HepG2 (cell line): ENCODE measurements at regions of chr6 and their contacts with region 1.

Region 1: DNA sequence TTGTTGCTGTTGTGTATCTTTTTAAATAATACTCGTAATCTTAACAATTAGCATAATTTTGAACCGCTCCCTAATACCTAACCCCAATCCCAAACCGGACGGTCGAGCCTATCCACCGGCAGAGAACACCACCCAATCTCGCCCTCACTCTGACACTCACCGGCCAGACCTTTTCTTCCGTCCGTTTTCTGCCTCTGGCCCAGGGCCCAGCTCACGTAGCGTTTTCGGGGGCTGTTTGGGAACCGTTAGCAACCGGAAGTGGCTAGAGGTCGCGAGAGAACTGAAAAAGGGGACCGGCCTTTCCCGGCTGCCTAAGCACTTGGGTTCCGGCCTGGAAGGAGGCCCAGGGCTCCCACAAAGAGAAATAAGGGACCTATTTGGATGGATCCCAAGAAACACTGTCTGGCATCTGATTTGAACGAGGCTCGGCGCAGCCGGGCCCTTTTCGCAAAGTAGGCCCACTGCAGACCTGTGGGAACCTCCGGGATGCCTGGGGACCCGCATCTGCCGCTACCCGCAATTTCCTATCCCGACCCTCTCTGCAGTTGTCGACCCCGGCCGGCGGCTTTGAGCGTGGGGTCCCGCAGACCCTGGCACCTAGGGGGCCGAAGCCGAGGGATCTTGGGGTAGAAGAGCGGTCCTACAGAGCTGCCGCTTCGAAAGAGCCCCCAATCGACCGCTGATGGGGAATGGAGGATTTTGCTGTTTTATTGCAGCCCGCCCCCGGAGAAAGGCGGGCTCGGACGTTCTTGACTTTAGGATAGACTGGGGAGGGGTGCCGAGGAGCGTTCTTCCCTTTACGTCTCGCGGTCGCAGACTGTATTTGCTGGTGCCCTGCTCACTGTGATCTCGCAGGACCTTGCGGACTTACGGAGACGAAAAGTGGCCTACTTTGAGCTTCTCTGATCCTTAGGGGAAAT is 4.8 kb upstream of the ZKSCAN8 start:
- DNase-seq: peak; percentile 94
- ATAC-seq: peak; percentile 84
- H3K4me3 ChIP-seq: peak overlapping the region; percentile 81 to 91 (median 86)
- H3K27ac ChIP-seq: peak overlapping the region; percentile 82
- H3K4me1 ChIP-seq: peaks cover 54% of the 10 kb centered on the region
- H3K27me3 ChIP-seq: no peaks in the 10 kb centered on the region; a peak in 1 of 5 replicates
- CTCF ChIP-seq: peak; percentile 37
- EP300 ChIP-seq: peak in 1 of 2 experiments; percentile 56; a peak in 3 of 4 replicates
- POLR2A ChIP-seq: peak; percentile 83 to 84
- RAD21 ChIP-seq: peak; percentile 63

Region 2: GRCh38 chr6:28124102-28124970 is 12.5 kb before region 1 on chr6 and contains the start of gene ZSCAN16:
- CTCF ChIA-PET with region 1: no interaction called
- POLR2A ChIA-PET with region 1: interaction called, 86 read pairs
- in situ Hi-C with region 1: no loop called
- intact Hi-C with region 1: loop called (anchors 1 kb)
- DNase-seq: peak; percentile 87
- ATAC-seq: peak; percentile 100
- H3K4me3 ChIP-seq: peak within 1 kb of the TSS; percentile 81 to 89 (median 86)
- H3K27ac ChIP-seq: peak within 1 kb of the TSS; percentile 60
- H3K4me1 ChIP-seq: peaks cover 24% of the 10 kb centered on the region
- H3K27me3 ChIP-seq: no peaks in the 10 kb centered on the region; a peak in 1 of 5 replicates
- CTCF ChIP-seq: peak; percentile 21; the same call in 1 of the 2 replicates
- EP300 ChIP-seq: no peak
- POLR2A ChIP-seq: peak; percentile 89
- RAD21 ChIP-seq: no peak; the same call in none of the 2 replicates
- total RNA-seq, gene ZSCAN16: 12.7 and 13.4 TPM in 2 replicates

Region 3: GRCh38 chr6:28225056-28225834 is 88.4 kb after region 1 on chr6 and contains the start of gene ZSCAN9:
- CTCF ChIA-PET with region 1: no interaction called
- POLR2A ChIA-PET with region 1: interaction called, 15 read pairs
- in situ Hi-C with region 1: loop called (anchors 5 kb)
- intact Hi-C with region 1: loop called (anchors 1 kb)
- DNase-seq: peak; percentile 86
- ATAC-seq: peak; percentile 97
- H3K4me3 ChIP-seq: peak within 1 kb of the TSS; percentile 91 to 99 (median 99)
- H3K27ac ChIP-seq: peak within 1 kb of the TSS; percentile 55
- H3K4me1 ChIP-seq: peaks cover 24% of the 10 kb centered on the region
- H3K27me3 ChIP-seq: no peaks in the 10 kb centered on the region; a peak in 2 of 5 replicates
- CTCF ChIP-seq: peak; percentile 35
- EP300 ChIP-seq: no peak
- POLR2A ChIP-seq: peak; percentile 79 to 81
- RAD21 ChIP-seq: peak; percentile 45; the same call in 1 of the 2 replicates
- total RNA-seq, gene ZSCAN9: 17.2 and 17.8 TPM in 2 replicates

Region 4: GRCh38 chr6:28281288-28282064 is 144.6 kb after region 1 on chr6 and contains the start of gene PGBD1:
- CTCF ChIA-PET with region 1: no interaction called
- POLR2A ChIA-PET with region 1: interaction called, 5 read pairs
- in situ Hi-C with region 1: no loop called
- intact Hi-C with region 1: loop called (anchors 2 kb)
- DNase-seq: peak; percentile 67
- ATAC-seq: peak; percentile 99
- H3K4me3 ChIP-seq: peak within 1 kb of the TSS; percentile 79 to 94 (median 89)
- H3K27ac ChIP-seq: peak within 1 kb of the TSS; percentile 42
- H3K4me1 ChIP-seq: peaks cover 16% of the 10 kb centered on the region
- H3K27me3 ChIP-seq: no peaks in the 10 kb centered on the region; a peak in 1 of 5 replicates
- CTCF ChIP-seq: peak; percentile 39
- EP300 ChIP-seq: peak in 1 of 2 experiments; percentile 5; a peak in 1 of 4 replicates
- POLR2A ChIP-seq: peak; percentile 71 to 72
- RAD21 ChIP-seq: peak; percentile 76
- total RNA-seq, gene PGBD1: 6.9 and 8.5 TPM in 2 replicates

Region 5: DNA sequence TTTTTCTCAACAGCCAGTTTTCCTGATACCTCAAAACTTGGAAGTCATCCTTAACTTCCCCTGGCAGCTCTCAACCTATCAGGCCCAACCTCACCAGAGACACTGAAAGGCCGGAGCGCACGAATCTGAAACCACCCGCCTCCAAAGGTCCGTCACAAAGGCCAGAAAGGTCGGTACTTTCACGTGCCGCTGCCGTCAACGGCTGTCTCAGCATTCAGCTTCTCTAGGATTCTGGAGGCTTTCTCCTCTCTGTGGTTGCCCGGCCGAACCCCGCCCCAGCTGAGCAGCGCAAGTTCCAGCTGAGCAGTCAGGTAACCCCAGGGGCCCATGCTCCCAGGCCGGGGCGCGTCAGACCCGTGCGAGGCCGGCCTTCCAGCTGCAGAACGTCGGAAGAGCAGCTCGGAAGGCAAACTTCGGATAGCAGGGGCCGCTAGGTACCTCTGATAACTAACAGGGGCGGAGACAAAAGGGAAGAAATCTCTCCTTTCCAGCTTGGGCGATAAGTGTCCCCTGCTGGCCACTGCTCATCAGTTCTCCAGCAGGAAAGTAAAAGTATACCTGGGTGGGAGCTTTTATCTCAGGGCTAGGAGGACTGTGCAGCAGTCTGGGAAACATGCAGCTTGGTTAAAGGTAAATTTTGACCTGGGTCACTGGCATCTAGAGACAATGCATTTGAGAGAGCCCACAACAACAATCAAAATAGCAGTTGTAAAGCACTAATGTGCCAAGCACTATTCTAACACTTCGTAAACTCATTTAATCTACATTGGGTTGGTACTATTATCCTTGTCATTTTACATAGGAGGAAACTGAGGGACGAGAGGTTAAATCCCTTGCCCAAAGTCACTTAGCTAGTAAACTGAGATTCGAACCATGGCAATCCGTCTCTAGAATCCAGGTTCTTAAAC is 246.6 kb after region 1 on chr6:
- CTCF ChIA-PET with region 1: no interaction called
- POLR2A ChIA-PET with region 1: interaction called, 20 read pairs
- in situ Hi-C with region 1: no loop called
- intact Hi-C with region 1: no loop called
- DNase-seq: peak; percentile 93
- ATAC-seq: peak; percentile 98
- H3K4me3 ChIP-seq: peak overlapping the region; percentile 59 to 74 (median 72)
- H3K27ac ChIP-seq: peak overlapping the region; percentile 56
- H3K4me1 ChIP-seq: peaks cover 39% of the 10 kb centered on the region
- H3K27me3 ChIP-seq: no peaks in the 10 kb centered on the region
- CTCF ChIP-seq: peak; percentile 72
- EP300 ChIP-seq: peak in 1 of 2 experiments; percentile 35; a peak in 2 of 4 replicates
- POLR2A ChIP-seq: peak; percentile 41 to 70; a peak in 2 of 4 replicates
- RAD21 ChIP-seq: peak; percentile 75

Region 6: GRCh38 chr6:29112119-29112518 is 975.3 kb after region 1 on chr6:
- CTCF ChIA-PET with region 1: no interaction called
- POLR2A ChIA-PET with region 1: no interaction called
- in situ Hi-C with region 1: no loop called
- intact Hi-C with region 1: no loop called
- DNase-seq: peak; percentile 31
- ATAC-seq: peak; percentile 97
- H3K4me3 ChIP-seq: no peak overlapping the region
- H3K27ac ChIP-seq: no peak overlapping the region
- H3K4me1 ChIP-seq: no peaks in the 10 kb centered on the region
- H3K27me3 ChIP-seq: no peaks in the 10 kb centered on the region
- CTCF ChIP-seq: peak; percentile 50
- EP300 ChIP-seq: no peak
- POLR2A ChIP-seq: no peak
- RAD21 ChIP-seq: no peak